GM12878 (cell line): ENCODE measurements at regions of chr16 and their contacts with region 1.

Region 1: GRCh38 chr16:23917621-23918020 is 81.8 kb downstream of the PRKCB start:
- DNase-seq: peak; percentile 76
- ATAC-seq: peak; percentile 79
- H3K4me3 ChIP-seq: peak overlapping the region; percentile 31; the same call in 1 of the 2 replicates
- H3K27ac ChIP-seq: peak overlapping the region; percentile 67
- H3K4me1 ChIP-seq: peaks cover 36% of the 10 kb centered on the region
- H3K27me3 ChIP-seq: no peaks in the 10 kb centered on the region
- CTCF ChIP-seq: no peak
- EP300 ChIP-seq: peak; percentile 53 to 66; a peak in 2 of 4 replicates
- POLR2A ChIP-seq: no peak
- RAD21 ChIP-seq: peak; percentile 18; the same call in 1 of the 2 replicates

Region 2: DNA sequence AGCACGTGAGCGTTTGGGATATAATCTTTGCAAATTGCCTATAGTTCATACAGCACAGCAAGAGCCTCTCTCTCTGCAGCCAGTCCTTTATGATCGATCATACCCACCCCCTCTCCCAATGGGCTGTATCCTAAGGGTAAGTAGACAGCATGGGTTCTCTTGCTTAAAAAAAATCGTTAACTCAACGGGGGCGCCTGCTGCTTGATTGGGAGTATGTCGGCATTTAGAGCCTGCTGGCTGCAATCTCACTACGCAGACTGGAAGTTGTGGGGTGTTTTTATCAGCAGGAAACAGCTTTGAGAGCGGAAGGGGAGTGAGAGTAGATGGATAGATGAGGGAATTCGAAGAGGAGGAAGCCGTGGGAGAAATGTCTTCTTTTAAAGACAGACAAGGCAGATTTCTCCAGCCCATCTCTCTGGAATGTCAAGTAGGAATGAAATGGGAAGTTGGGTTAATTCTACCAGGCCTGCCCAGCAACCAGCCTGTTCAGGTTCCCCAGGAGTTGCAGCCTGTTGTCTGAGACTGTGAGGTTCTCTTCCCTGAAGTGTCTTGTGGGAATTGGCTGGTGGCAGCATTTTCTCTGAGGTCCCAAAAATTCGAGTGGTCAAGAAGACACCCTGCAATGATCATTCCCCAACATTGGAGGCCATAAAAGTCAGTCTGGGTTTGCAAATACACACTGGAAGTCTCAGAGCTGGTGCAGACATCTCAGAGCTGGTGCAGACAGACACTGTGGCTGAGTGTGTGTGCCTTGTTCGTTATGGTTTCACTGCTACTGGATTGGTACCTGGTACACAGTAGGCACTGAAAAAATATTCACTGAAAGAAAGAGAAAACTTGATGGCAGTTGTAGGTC is 16.2 kb before region 1 on chr16:
- CTCF ChIA-PET with region 1: interaction called, 4 read pairs
- POLR2A ChIA-PET with region 1: interaction called, 4 read pairs
- RAD21 ChIA-PET with region 1: interaction called, 4 read pairs
- SMC1A ChIA-PET with region 1: interaction called, 13 read pairs
- in situ Hi-C with region 1: no loop called
- intact Hi-C with region 1: no loop called
- DNase-seq: no peak
- ATAC-seq: no peak
- H3K4me3 ChIP-seq: no peak overlapping the region
- H3K27ac ChIP-seq: no peak overlapping the region; the same call in none of the 2 replicates
- H3K4me1 ChIP-seq: peaks cover 9% of the 10 kb centered on the region
- H3K27me3 ChIP-seq: no peaks in the 10 kb centered on the region
- CTCF ChIP-seq: no peak
- EP300 ChIP-seq: no peak
- POLR2A ChIP-seq: no peak
- RAD21 ChIP-seq: no peak